HCT116 (cell line): ENCODE measurements at regions of chr18 and their contacts with region 1.

Region 1: GRCh38 chr18:36809590-36810381 is 19.0 kb downstream of the TPGS2 start:
- DNase-seq: peak; percentile 39
- ATAC-seq: peak; percentile 99
- H3K4me3 ChIP-seq: no peak overlapping the region
- H3K27ac ChIP-seq: no peak overlapping the region
- H3K4me1 ChIP-seq: no peaks in the 10 kb centered on the region
- H3K27me3 ChIP-seq: no peaks in the 10 kb centered on the region
- CTCF ChIP-seq: peak; percentile 51 to 79 (median 73); a peak in 5 of 6 replicates
- POLR2A ChIP-seq: no peak
- RAD21 ChIP-seq: peak; percentile 53

Region 2: GRCh38 chr18:36688020-36688965 is 121.5 kb before region 1 on chr18:
- CTCF ChIA-PET with region 1: no interaction called
- POLR2A ChIA-PET with region 1: no interaction called
- RAD21 ChIA-PET with region 1: no interaction called
- intact Hi-C with region 1: loop called (anchors 1 kb)
- DNase-seq: peak; percentile 52
- ATAC-seq: peak; percentile 76
- H3K4me3 ChIP-seq: no peak overlapping the region
- H3K27ac ChIP-seq: no peak overlapping the region
- H3K4me1 ChIP-seq: no peaks in the 10 kb centered on the region
- H3K27me3 ChIP-seq: no peaks in the 10 kb centered on the region
- CTCF ChIP-seq: peak; percentile 68 to 95 (median 93)
- POLR2A ChIP-seq: no peak
- RAD21 ChIP-seq: peak; percentile 62

Region 3: DNA sequence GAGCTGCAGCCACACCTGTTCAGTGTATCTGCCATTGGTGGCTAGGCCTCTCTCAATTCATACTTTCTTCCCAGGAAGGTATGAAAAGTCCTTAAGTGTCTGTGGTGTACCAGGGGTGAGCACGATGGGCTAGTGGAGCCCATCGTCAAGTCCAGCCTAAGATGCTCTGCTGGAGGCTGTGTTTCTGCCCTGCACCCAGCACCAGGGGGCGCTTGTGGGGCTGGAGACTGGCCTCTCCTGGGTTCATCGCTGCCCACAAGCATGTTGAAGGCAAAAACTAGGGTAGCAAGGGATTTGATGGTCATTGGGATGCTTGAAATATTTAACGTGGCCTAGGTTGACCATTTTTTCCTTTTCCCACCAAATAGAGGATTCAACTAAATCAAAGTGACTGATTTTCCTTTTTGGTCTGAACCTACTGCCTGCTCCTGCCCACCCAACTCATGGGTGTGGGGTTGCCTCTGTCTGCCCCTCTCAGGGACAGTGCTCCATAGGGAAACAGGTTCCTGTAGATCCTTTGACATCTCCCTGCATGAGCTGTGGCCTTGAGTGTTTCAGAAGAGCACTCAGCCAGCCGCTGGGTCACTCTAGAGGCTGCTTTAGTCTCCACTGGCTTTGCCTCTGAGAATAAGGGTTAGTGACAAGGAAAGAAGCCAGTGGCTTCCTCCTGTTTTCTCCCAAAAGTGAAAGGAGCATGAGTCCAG is 40.0 kb before region 1 on chr18:
- CTCF ChIA-PET with region 1: no interaction called
- POLR2A ChIA-PET with region 1: no interaction called
- RAD21 ChIA-PET with region 1: no interaction called
- intact Hi-C with region 1: loop called (anchors 1 kb)
- DNase-seq: peak; percentile 13
- ATAC-seq: peak; percentile 86
- H3K4me3 ChIP-seq: no peak overlapping the region
- H3K27ac ChIP-seq: no peak overlapping the region
- H3K4me1 ChIP-seq: no peaks in the 10 kb centered on the region
- H3K27me3 ChIP-seq: no peaks in the 10 kb centered on the region
- CTCF ChIP-seq: peak; percentile 21 to 78 (median 76); a peak in 4 of 6 replicates
- POLR2A ChIP-seq: no peak
- RAD21 ChIP-seq: peak; percentile 36; the same call in 1 of the 2 replicates

Region 4: DNA sequence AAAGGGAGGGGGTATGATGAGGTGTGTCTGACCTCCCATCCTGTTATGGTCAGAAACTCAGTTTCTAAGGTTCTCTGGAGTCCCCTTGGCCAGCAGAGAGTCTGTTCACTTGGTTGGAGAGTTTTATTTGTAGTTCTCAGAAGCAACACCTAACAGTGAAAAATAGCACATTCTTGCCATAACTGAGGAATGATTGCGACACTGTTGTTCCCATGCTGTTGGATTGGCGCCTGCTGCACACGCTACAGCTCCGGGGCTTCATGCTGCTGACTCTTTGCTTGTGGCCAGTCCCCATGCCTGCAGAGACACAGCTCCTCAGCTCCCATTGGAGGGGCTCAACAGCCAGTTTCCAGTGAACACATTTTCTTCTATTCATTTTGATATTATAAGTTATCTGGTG is 23.1 kb before region 1 on chr18:
- CTCF ChIA-PET with region 1: no interaction called
- POLR2A ChIA-PET with region 1: no interaction called
- RAD21 ChIA-PET with region 1: no interaction called
- intact Hi-C with region 1: no loop called
- DNase-seq: no peak
- ATAC-seq: no peak
- H3K4me3 ChIP-seq: no peak overlapping the region
- H3K27ac ChIP-seq: no peak overlapping the region
- H3K4me1 ChIP-seq: peaks cover 0 to 3% of the 10 kb centered on the region in 2 experiments; a peak in 1 of 4 replicates
- H3K27me3 ChIP-seq: no peaks in the 10 kb centered on the region
- CTCF ChIP-seq: no peak
- POLR2A ChIP-seq: no peak
- RAD21 ChIP-seq: no peak